K562 (cell line): ENCODE measurements at regions of chr1 and their contacts with region 1.

Region 1: DNA sequence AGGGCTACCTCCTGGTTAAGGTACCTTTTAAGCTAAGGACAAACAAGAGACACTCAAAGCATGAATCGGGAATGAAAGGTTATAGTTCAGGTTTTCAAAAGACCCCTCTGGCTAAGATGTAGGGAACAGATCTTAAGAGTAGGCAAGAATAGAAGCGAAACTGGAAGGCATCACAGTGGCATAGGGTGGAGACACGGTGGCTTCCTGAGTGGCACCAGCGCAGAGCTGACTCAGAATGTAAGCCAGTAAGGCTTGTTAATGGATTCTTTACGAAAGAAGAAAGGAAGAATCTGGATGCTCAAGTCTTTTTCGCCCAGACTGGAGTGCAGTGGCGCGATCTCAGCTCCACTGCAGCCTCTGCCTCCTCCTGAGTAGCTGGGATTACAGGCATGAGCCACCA is 21.2 kb downstream of the PADI6 start:
- DNase-seq: no peak
- ATAC-seq: no peak
- H3K4me3 ChIP-seq: no peak overlapping the region
- H3K27ac ChIP-seq: no peak overlapping the region
- H3K4me1 ChIP-seq: peaks cover 6 to 8% of the 10 kb centered on the region in 2 experiments; a peak in 4 of 5 replicates
- H3K27me3 ChIP-seq: peaks cover 53 to 65% of the 10 kb centered on the region in 2 experiments
- CTCF ChIP-seq: no peak
- EP300 ChIP-seq: no peak
- POLR2A ChIP-seq: no peak
- RAD21 ChIP-seq: no peak

Region 2: GRCh38 chr1:17319561-17320350 is 73.5 kb before region 1 on chr1:
- CTCF ChIA-PET with region 1: no interaction called
- POLR2A ChIA-PET with region 1: no interaction called
- in situ Hi-C with region 1: no loop called
- intact Hi-C with region 1: no loop called
- DNase-seq: no peak
- ATAC-seq: peak; percentile 32; the same call in 1 of the 3 replicates
- H3K4me3 ChIP-seq: no peak overlapping the region
- H3K27ac ChIP-seq: no peak overlapping the region
- H3K4me1 ChIP-seq: no peaks in the 10 kb centered on the region
- H3K27me3 ChIP-seq: peaks cover 20 to 47% of the 10 kb centered on the region in 2 experiments; a peak in 4 of 5 replicates
- CTCF ChIP-seq: no peak
- EP300 ChIP-seq: no peak
- POLR2A ChIP-seq: no peak
- RAD21 ChIP-seq: no peak

Region 3: DNA sequence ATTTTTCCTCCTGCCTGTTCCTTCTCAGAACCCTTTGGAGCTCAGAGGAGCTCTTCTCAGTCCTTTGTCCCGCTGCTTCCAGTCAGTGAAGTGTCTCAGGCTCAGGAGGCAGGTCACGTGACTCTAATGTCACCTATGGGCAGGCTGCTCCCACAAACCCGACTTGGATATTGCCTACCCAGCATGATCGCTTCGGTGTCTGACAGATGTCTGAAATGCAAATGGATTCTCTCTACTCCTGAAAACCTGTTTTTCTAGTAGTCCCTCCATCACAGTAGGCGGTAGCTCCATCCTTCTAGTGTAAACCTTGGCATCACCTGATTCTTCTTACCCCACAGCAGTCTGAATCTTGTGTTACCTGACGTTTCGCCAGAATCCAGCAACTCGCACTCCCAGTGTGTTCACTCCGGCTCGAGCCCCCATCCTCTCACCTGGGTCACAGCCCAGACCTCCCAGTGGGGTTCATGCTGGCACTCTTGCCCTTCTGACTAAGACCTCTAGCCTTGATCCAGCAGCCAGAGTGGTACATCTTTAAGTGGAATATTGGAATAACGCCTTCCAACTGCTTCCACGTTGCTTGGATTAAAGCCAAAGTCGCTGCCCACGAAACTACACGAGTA is 15.8 kb before region 1 on chr1:
- CTCF ChIA-PET with region 1: no interaction called
- POLR2A ChIA-PET with region 1: interaction called, 18 read pairs
- in situ Hi-C with region 1: no loop called
- intact Hi-C with region 1: no loop called
- DNase-seq: peak in 1 of 4 experiments; percentile 50
- ATAC-seq: no peak
- H3K4me3 ChIP-seq: no peak overlapping the region
- H3K27ac ChIP-seq: no peak overlapping the region
- H3K4me1 ChIP-seq: no peaks in the 10 kb centered on the region
- H3K27me3 ChIP-seq: peaks cover 57 to 83% of the 10 kb centered on the region in 2 experiments
- CTCF ChIP-seq: no peak
- EP300 ChIP-seq: no peak
- POLR2A ChIP-seq: no peak
- RAD21 ChIP-seq: no peak

Region 4: GRCh38 chr1:17405898-17406759 is 12.9 kb after region 1 on chr1:
- CTCF ChIA-PET with region 1: no interaction called
- POLR2A ChIA-PET with region 1: interaction called, 14 read pairs
- in situ Hi-C with region 1: no loop called
- intact Hi-C with region 1: no loop called
- DNase-seq: peak; percentile 81 to 84 (median 82)
- ATAC-seq: peak; percentile 94
- H3K4me3 ChIP-seq: no peak overlapping the region
- H3K27ac ChIP-seq: no peak overlapping the region
- H3K4me1 ChIP-seq: peaks cover 13 to 40% of the 10 kb centered on the region in 2 experiments; a peak in 4 of 5 replicates
- H3K27me3 ChIP-seq: no peaks in the 10 kb centered on the region
- CTCF ChIP-seq: peak; percentile 90 to 96 (median 94)
- EP300 ChIP-seq: no peak
- POLR2A ChIP-seq: peak; percentile 79
- RAD21 ChIP-seq: peak; percentile 39 to 69; a peak in 3 of 4 replicates